ENCODE measurements at regions of chr2 and their contacts with region 1.

Region 1: GRCh38 chr2:171433763-171434670 is at the starts of genes DCAF17 and METTL8:
- DNase-seq: peak; percentile 98
- H3K4me3 ChIP-seq: peak within 1 kb of the TSS; percentile 80
- H3K27ac ChIP-seq: peak within 1 kb of the TSS; percentile 94
- H3K4me1 ChIP-seq: peaks cover 29% of the 10 kb centered on the region
- H3K27me3 ChIP-seq: no peaks in the 10 kb centered on the region
- CTCF ChIP-seq: peak; percentile 46; the same call in 1 of the 2 replicates
- total RNA-seq, gene DCAF17: 25.0 and 26.1 TPM in 2 replicates
- total RNA-seq, gene METTL8: 29.4 and 33.5 TPM in 2 replicates

Region 2: DNA sequence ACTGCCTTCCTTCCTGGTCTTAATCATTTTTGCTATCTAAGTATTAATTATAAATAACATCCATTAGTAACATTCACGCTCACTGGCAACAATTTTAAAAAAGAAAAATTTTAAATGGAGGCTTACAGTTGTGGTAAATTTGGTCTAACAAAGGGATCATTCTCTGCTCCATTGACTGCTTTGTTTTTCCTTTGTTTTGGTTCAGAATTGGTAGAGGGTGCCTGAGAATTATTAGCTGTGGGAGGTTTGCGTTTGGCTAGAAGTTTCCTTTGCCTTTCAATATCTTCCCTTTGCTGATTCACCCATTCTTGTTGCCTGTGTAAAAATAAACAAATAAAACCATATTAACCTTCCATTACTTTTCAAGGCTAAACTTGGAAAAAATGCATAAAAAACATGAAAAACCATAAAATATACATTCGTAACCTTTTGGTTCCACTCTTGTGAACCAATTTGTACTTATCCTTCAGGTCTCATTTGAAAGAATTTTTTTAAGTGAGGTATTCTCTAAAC is 387.9 kb before region 1 on chr2:
- CTCF ChIA-PET with region 1: no interaction called
- POLR2A ChIA-PET with region 1: no interaction called
- intact Hi-C with region 1: no loop called
- DNase-seq: no peak
- H3K4me3 ChIP-seq: no peak overlapping the region
- H3K27ac ChIP-seq: no peak overlapping the region
- H3K4me1 ChIP-seq: no peaks in the 10 kb centered on the region
- H3K27me3 ChIP-seq: no peaks in the 10 kb centered on the region
- CTCF ChIP-seq: no peak

Region 3: GRCh38 chr2:171160119-171160955 is 273.7 kb before region 1 on chr2 and contains the start of gene TLK1:
- CTCF ChIA-PET with region 1: no interaction called
- POLR2A ChIA-PET with region 1: no interaction called
- intact Hi-C with region 1: loop called (anchors 5 kb)
- DNase-seq: peak; percentile 84
- H3K4me3 ChIP-seq: peak within 1 kb of the TSS; percentile 74
- H3K27ac ChIP-seq: peak within 1 kb of the TSS; percentile 99
- H3K4me1 ChIP-seq: peaks cover 59% of the 10 kb centered on the region
- H3K27me3 ChIP-seq: no peaks in the 10 kb centered on the region
- CTCF ChIP-seq: no peak
- total RNA-seq, gene TLK1: 79.1 and 86.8 TPM in 2 replicates